ENCODE measurements at regions of chr14 and their contacts with region 1.

Region 1: DNA sequence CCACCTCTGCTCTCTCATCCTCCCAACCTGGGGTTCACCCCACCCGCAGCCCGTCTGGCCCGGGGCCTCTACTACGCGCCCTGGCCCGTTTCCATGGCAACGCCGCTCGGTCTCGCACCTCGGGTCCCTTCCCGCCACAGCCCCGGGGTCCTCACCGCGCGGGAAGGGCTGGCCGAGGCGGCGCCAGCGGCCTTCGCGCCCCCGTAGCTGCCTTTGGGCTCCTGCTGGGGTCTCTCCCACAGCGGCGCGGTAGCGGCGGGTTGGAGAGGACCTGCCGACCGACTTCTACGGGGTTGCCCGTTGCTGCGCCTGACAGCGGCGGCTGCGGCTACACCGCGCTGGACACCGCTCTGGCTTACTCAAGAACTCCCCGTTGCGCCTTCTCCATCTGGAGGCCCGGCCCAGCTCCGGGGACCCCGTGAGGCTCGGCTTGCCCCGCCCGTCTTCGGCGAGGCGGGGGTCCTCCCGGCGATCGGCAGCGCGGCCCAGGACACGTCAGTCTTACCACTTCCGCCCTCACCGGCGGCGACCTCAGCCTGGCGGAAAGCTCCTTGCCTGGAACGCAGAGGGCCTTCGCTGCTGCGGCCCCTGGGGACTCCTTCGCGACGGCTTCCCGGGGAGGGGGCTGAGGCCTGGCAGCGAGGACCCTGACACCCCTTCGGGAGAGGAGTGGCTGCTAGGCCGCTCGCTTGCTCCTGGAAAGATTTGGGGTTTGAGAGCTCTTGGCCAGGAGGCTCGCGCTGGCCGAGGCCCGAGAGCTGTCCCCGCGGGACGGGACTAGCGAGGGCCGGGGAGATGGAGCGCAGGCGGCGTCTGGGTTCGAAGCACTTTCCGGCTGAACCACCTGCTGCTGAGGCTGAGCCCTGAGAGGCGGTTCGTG is at the start of gene TM9SF1:
- DNase-seq: peak; percentile 96
- total RNA-seq, gene TM9SF1: 19.1 TPM

Region 2: GRCh38 chr14:24141097-24141880 is 54.1 kb before region 1 on chr14 and contains the start of gene EMC9:
- intact Hi-C with region 1: loop called (anchors 5 kb)
- DNase-seq: peak; percentile 100
- total RNA-seq, gene EMC9: 14.6 TPM

Region 3: GRCh38 chr14:24215495-24216344 is 20.3 kb after region 1 on chr14 and contains the start of gene MDP1:
- intact Hi-C with region 1: loop called (anchors 2 kb)
- DNase-seq: peak; percentile 93
- total RNA-seq, gene MDP1: 16.7 TPM

Region 4: GRCh38 chr14:24289649-24290249 is 94.3 kb after region 1 on chr14:
- intact Hi-C with region 1: no loop called
- DNase-seq: no peak

Measured in cardiac septum (tissue), 1 donor.